Mammary epithelial cell (primary cell): ENCODE measurements at regions of chr2 and their contacts with region 1.

Region 1: GRCh38 chr2:198546122-198546521 is 741.7 kb downstream of the PLCL1 start:
- DNase-seq: no peak
- H3K4me3 ChIP-seq: no peak overlapping the region
- H3K27ac ChIP-seq: no peak overlapping the region
- H3K4me1 ChIP-seq: no peaks in the 10 kb centered on the region
- H3K27me3 ChIP-seq: peaks cover 7% of the 10 kb centered on the region
- CTCF ChIP-seq: no peak

Region 2: DNA sequence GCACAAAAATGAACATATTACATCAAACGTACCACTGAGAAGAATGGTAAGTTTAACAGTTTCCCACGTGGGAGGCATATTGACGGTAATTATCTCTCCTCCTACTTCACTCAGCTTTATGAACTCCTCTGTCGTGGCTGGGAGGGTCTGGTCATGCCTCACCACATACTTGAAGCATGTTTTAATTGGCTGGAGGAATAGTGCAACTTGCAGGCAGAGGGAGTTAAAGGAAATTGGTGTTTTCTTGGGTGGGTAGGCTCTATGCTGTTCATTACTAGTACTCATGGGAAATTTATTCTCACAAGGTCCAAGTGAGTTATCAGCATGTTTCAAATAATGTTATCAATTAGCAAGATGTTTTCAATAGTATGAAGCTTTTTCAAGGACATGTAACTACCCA is 25.3 kb after region 1 on chr2:
- CTCF ChIA-PET with region 1: no interaction called
- dilution Hi-C with region 1: no loop called
- in situ Hi-C with region 1: no loop called
- intact Hi-C with region 1: loop called (anchors 2 kb)
- DNase-seq: no peak
- H3K4me3 ChIP-seq: no peak overlapping the region
- H3K27ac ChIP-seq: no peak overlapping the region
- H3K4me1 ChIP-seq: no peaks in the 10 kb centered on the region
- H3K27me3 ChIP-seq: no peaks in the 10 kb centered on the region
- CTCF ChIP-seq: no peak

Region 3: DNA sequence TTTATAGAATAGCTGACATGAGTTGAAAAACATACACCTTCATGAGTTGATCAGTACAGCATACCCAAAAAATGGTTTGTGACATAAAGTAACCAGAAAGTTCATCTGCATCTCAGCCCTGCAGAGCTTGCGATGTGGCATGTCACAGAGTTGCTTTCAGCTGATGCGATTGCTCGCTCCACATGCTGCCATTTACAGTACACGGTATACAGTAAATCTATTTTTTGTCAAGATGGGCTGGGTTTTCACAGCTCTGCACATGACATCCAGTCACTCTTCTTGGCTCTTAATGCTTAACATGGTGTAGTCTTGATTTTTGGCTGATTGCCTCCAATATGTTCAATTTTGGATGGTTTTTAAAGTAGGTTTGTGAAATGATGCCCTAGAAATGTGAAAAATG is 99.7 kb after region 1 on chr2:
- CTCF ChIA-PET with region 1: no interaction called
- dilution Hi-C with region 1: no loop called
- in situ Hi-C with region 1: no loop called
- intact Hi-C with region 1: no loop called
- DNase-seq: no peak
- H3K4me3 ChIP-seq: no peak overlapping the region
- H3K27ac ChIP-seq: no peak overlapping the region
- H3K4me1 ChIP-seq: no peaks in the 10 kb centered on the region
- H3K27me3 ChIP-seq: no peaks in the 10 kb centered on the region
- CTCF ChIP-seq: no peak